Keratinocyte (primary cell): ENCODE measurements at regions of chr9 and their contacts with region 1.

Region 1: DNA sequence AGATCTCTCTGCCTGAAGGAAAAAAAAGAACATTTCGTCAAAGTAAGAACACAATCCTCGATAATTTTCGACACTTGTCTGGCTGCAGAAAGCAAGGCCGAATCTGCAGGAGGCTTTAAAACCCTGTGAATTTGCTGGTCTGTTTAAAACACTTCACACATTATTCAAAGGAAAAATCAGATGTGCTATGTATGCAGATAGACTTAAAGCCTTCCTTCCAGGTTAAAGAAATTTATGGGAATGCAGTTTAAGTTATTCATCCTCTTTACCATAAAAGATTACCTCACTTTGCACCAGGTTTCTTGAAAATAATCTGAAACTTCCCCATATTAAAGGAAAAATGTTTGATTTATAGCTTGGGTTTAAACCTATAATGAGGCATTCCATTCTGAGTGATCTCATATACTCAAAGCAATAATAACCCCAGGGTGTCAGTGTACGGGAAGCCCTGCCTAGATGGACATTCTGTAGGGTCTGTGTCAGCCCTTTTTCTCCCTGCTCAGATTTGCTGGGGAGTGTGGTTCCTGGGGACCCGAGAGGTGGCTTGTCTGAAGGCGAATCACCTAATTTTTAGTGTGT is 323.5 kb upstream of the SLC24A2 start:
- DNase-seq: no peak
- H3K4me3 ChIP-seq: no peak overlapping the region
- H3K27ac ChIP-seq: no peak overlapping the region
- H3K4me1 ChIP-seq: no peaks in the 10 kb centered on the region
- H3K27me3 ChIP-seq: no peaks in the 10 kb centered on the region
- CTCF ChIP-seq: no peak

Region 2: DNA sequence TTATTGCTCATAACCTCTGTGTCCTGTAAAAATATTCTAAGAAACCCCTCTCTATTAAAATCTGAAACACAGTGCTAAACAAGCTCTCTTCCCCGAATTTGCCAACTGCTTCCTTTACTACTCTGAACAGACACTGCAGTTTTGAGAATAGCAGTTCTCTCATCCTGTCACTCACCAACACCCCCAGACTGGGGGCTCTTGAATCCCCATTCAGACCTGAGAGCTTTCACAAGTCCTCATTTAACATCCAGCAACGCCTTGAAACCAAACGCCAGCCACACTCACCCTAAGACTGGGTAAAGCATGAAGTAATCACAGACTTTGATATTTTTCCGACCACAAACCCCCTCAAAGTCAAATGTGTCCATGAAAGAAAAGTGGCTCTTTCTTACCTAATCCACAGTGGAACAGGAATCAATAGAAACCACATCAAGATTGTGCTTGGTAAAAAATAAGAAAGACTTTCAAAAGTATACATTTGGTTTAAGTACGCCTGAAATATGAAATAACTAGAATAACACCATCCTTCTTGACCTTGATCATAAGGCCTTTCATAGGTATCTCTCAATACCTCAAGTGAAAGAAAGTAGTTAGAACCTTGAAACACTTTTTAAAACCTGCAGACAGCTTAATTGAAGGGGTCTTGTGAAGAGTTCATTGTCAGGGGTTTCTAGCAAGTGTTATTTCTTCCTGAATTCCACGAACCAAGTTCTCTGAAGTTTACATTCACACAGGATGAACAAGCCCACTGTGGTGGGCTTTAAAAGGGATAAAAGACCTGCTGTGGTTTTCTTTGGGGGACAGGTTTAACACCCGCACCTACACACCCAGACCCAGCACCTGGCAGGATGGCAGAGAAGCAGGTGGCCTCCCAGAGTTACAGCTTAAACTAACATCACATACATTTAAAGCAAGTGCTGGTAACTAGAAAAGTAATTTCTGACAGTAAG is 97.4 kb after region 1 on chr9:
- dilution Hi-C with region 1: loop called (anchors 25 kb)
- DNase-seq: no peak
- H3K4me3 ChIP-seq: no peak overlapping the region
- H3K27ac ChIP-seq: no peak overlapping the region
- H3K4me1 ChIP-seq: no peaks in the 10 kb centered on the region
- H3K27me3 ChIP-seq: no peaks in the 10 kb centered on the region
- CTCF ChIP-seq: no peak

Region 3: GRCh38 chr9:20253635-20254034 is 141.3 kb after region 1 on chr9:
- dilution Hi-C with region 1: no loop called
- DNase-seq: no peak
- H3K4me3 ChIP-seq: no peak overlapping the region
- H3K27ac ChIP-seq: no peak overlapping the region
- H3K4me1 ChIP-seq: no peaks in the 10 kb centered on the region
- H3K27me3 ChIP-seq: no peaks in the 10 kb centered on the region
- CTCF ChIP-seq: no peak